Posterior vena cava (tissue), 2 donors: ENCODE measurements at regions of chr4 and their contacts with region 1.

Region 1: GRCh38 chr4:68987007-68987406 is 35.4 kb upstream of the UGT2A3 start:
- DNase-seq: no peak

Region 2: DNA sequence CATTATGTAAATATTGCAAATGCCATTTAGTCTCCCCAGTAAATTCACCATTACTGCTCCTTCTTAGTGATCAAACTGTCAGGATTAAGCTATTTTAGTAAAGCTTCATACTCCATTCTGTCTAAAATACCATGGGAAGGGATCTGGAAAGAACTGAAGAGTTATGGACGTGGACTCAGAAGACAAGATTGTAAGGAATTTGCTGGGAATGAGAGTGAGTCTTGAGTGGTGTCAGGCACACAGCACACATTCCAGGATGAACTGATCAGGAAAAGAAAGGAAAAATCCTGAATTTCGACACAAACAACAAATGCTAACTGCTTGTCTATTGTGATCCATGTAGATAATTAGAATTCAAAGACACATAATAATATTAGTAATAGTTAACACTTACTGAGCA is 1752.7 kb before region 1 on chr4:
- intact Hi-C with region 1: loop called in 1 of 2 experiments (anchors 10 kb)
- DNase-seq: no peak